Mammary epithelial cell (primary cell): ENCODE measurements at regions of chr2 and their contacts with region 1.

Region 1: DNA sequence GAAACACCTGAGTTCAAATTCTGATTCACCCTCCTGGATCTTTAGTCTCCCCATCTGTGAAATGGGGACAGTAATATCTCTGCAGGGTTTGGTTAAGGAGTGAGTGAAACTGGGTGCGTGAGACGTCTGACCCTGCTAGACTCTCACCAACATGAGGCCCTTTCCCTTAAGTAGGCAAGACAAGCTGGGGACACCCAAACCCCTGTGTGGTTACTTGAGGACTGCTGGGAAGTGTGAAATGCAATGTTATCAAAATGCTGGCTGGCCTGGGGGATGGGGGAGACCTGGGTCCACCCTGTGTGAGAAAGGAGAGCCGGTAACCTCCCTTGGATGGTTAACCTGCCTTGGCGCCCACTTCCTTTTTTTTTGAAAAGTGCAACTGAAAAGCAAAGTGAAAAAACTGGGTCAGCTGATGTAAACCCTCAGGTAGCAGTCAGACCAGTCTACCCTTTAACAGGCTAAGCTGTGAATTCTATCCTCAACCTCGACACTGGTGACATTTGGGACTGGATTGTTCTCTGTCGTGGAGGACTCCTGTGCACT is 82.3 kb downstream of the INPP5D start:
- DNase-seq: no peak
- H3K4me3 ChIP-seq: peak overlapping the region in 2 of 3 experiments; percentile 32 to 72
- H3K27ac ChIP-seq: no peak overlapping the region
- H3K4me1 ChIP-seq: peaks cover 26% of the 10 kb centered on the region
- H3K27me3 ChIP-seq: no peaks in the 10 kb centered on the region
- CTCF ChIP-seq: no peak

Region 2: DNA sequence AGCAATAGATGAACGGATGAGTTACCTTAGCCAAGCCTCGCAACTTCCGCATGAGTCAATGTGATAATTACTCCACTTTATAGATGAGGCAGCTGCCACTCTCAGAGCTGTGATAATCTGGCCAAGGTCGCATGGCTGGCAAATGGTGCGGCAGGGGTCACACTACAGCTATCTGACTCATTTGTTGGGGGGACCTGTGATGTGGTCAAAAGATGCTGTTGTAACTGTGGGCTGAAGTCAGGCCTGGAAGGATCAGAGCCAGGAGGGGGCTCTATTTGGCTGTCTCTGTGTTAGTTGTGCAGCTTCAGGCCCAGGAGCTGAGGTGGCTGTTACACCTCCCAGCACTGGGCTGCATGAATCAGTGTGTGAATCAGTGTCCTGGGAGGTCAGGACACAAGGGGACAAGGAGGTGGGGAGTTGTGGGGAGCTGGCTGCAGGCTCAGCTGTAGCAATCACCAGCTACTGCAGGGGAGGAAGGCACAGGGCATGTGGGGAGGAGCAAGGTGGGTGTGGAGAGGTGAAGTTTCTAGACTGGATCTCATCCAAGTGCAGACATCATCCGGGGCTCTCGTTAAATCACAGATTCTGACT is 162.5 kb before region 1 on chr2:
- CTCF ChIA-PET with region 1: no interaction called
- dilution Hi-C with region 1: no loop called
- in situ Hi-C with region 1: no loop called
- intact Hi-C with region 1: loop called (anchors 1 kb)
- DNase-seq: peak; percentile 55
- H3K4me3 ChIP-seq: no peak overlapping the region
- H3K27ac ChIP-seq: no peak overlapping the region
- H3K4me1 ChIP-seq: peaks cover 22% of the 10 kb centered on the region
- H3K27me3 ChIP-seq: no peaks in the 10 kb centered on the region
- CTCF ChIP-seq: peak in 1 of 2 donors; percentile 34

Region 3: GRCh38 chr2:233185963-233186362 is 43.5 kb after region 1 on chr2:
- CTCF ChIA-PET with region 1: no interaction called
- dilution Hi-C with region 1: loop called (anchors 5 kb)
- in situ Hi-C with region 1: no loop called
- intact Hi-C with region 1: no loop called
- DNase-seq: no peak
- H3K4me3 ChIP-seq: no peak overlapping the region
- H3K27ac ChIP-seq: no peak overlapping the region
- H3K4me1 ChIP-seq: peaks cover 17% of the 10 kb centered on the region
- H3K27me3 ChIP-seq: no peaks in the 10 kb centered on the region
- CTCF ChIP-seq: no peak